ENCODE measurements at regions of chr1 and their contacts with region 1.

Region 1: DNA sequence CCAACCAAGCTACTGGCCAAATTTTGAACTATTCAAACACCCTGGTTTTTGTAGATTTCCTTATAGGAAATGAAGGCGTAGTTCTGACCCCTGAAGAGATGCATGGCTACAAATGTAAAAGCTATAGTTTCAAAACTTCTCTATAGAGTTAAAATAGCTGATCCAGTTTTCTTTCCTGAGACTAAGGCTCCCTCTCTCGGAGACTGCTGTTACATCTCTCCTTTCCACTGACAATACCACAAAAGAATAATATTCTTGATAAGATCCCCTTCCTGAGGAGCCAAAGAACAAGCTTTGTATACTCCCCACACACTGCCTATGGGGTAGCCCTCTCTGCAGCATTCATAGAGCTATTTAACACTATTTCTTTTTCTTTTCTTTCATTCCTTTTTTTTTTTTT is 6.7 kb upstream of the CFAP126 start:
- DNase-seq: no peak
- ATAC-seq: no peak
- H3K4me3 Mint-ChIP-seq: no peak overlapping the region
- H3K27ac Mint-ChIP-seq: no peak overlapping the region
- H3K4me1 Mint-ChIP-seq: no peaks in the 10 kb centered on the region
- H3K27me3 Mint-ChIP-seq: no peaks in the 10 kb centered on the region

Region 2: DNA sequence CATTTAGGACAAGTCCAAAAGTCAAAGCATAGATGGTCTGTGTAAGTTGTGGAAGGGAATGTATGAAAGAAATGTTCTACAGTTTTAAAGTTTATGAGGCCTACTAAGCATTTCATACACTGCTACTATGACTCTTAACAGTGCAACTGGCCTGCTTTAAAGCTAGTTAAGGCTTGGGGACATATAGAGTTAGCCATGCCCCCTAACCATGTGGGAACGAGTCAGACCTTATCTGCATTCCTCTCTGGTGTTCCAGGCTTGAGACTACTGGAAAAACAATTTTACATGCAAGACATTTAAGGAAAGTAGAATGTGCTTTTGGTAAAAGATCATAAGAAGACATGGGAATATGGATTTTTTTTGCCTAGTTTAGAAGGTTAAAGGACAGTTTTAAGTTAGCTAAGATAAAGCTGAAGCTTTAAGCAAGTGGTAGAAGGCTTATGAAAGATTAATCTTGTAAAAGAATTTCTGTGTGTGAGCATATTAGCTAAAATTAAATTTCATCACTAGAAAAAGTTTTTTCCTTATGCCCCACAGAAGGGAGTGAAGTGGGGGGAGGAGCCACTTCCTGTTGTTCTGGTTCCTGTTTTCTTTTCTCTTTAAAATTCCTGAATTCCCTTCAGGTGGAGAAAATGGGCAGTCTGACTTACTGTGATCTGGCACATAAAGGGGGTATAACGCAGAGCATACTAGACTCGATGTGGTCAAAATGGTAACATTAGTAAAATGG is 653.9 kb before region 1 on chr1:
- CTCF ChIA-PET with region 1: no interaction called
- POLR2A ChIA-PET with region 1: no interaction called
- intact Hi-C with region 1: no loop called
- DNase-seq: no peak
- ATAC-seq: no peak
- H3K4me3 Mint-ChIP-seq: no peak overlapping the region
- H3K27ac Mint-ChIP-seq: no peak overlapping the region
- H3K4me1 Mint-ChIP-seq: peaks cover 55% of the 10 kb centered on the region
- H3K27me3 Mint-ChIP-seq: no peaks in the 10 kb centered on the region

Region 3: GRCh38 chr1:161330346-161330745 is 44.0 kb before region 1 on chr1:
- CTCF ChIA-PET with region 1: no interaction called
- POLR2A ChIA-PET with region 1: no interaction called
- intact Hi-C with region 1: loop called in 1 of 2 experiments (anchors 5 kb)
- DNase-seq: no peak
- ATAC-seq: no peak
- H3K4me3 Mint-ChIP-seq: no peak overlapping the region
- H3K27ac Mint-ChIP-seq: no peak overlapping the region
- H3K4me1 Mint-ChIP-seq: no peaks in the 10 kb centered on the region
- H3K27me3 Mint-ChIP-seq: no peaks in the 10 kb centered on the region

Measured in activated CD4-positive, alpha-beta T cell treated with anti-CD3 and anti-CD28 coated beads for 36 hours (primary cell).